ENCODE measurements at regions of chr15 and their contacts with region 1.

Region 1: GRCh38 chr15:66233487-66234415 is 19.8 kb downstream of the MEGF11 start:
- DNase-seq: no peak
- H3K4me3 ChIP-seq: no peak overlapping the region
- H3K27ac ChIP-seq: no peak overlapping the region
- H3K4me1 ChIP-seq: no peaks in the 10 kb centered on the region
- H3K27me3 ChIP-seq: no peaks in the 10 kb centered on the region
- CTCF ChIP-seq: no peak
- POLR2A ChIP-seq: no peak

Region 2: DNA sequence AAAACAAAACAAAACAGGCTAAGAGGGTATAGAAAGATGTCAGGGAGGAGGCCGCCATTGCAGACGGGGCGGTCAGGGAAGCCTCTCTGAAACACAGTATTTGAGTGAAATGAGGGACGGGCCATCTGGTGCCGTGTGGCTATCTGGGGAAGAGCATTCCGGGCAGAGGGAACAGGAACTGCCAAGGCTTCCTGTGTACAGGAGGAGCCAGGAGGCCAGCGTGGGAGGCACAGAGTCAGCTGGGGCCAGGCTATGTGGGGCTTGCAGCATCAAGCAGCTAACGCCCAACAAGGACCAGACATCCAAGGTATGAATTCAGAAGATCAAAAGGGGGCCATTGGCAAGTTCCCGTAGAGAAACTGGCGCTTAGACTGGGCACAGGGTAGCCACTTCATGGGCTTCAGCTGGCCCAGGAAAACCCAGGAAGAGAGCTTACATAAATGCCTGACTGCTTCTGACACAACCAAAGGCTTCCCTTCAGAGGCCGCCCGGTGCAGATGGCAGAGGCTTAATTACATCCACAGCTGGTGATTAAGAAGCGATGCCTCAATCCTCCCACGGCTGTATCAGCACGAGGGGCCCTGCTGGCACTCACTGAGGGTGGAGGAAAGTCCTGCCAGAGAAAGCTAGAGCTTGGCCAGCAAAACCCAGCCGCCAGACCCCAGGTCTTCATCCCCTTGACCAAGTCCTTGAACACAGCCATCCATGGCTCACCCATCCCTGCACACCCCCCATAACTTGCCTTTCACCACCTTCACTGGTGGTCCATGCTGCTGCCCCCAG is 125.1 kb before region 1 on chr15:
- intact Hi-C with region 1: no loop called
- DNase-seq: no peak
- H3K4me3 ChIP-seq: no peak overlapping the region
- H3K27ac ChIP-seq: no peak overlapping the region
- H3K4me1 ChIP-seq: no peaks in the 10 kb centered on the region
- H3K27me3 ChIP-seq: no peaks in the 10 kb centered on the region
- CTCF ChIP-seq: no peak
- POLR2A ChIP-seq: no peak

Region 3: DNA sequence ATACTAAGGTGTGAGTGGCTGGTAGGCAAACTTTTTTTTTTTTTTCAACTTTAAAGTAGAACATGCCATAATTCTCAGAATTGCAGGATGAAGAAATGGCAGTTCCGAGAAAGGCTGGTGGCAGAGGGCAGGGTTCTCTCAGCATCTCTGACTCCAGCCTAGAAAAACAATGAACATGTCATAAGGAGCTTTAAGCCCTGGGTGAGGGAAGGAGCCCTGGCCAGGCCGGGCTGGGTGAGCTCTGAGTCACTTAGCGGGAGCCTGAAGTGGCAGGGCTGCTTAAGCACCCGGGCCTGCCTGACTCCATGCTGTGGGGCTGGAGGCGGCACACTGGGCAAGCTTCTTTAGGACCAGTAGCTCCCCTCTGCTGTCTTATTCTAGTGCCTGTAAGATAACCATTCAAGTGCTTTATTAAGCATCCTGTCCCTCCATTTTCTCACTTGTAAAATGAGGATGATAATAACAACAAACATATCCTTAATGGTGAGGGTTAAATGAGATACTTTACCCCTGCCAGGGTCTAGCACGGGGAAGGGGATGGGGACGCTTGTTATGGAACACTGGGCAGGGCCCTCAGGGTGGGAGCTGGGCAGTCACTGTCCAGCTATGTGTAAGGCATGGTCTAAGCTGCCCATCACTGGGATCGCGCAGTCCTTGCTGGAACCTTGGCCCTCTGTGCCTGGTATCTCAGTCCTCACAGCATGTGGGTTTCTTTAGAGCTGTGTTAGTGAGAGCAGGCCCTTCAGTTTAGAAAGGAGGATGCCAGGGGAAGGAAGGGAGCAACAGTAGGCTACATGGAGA is 486.7 kb after region 1 on chr15:
- intact Hi-C with region 1: no loop called
- DNase-seq: no peak
- H3K4me3 ChIP-seq: no peak overlapping the region
- H3K27ac ChIP-seq: no peak overlapping the region
- H3K4me1 ChIP-seq: peaks cover 84% of the 10 kb centered on the region
- H3K27me3 ChIP-seq: no peaks in the 10 kb centered on the region
- CTCF ChIP-seq: no peak
- POLR2A ChIP-seq: no peak

Region 4: GRCh38 chr15:67224889-67225288 is 991.1 kb after region 1 on chr15:
- intact Hi-C with region 1: loop called (anchors 5 kb)
- DNase-seq: no peak
- H3K4me3 ChIP-seq: no peak overlapping the region
- H3K27ac ChIP-seq: no peak overlapping the region
- H3K4me1 ChIP-seq: peaks cover 4% of the 10 kb centered on the region
- H3K27me3 ChIP-seq: no peaks in the 10 kb centered on the region
- CTCF ChIP-seq: no peak
- POLR2A ChIP-seq: no peak